CD4-positive, alpha-beta memory T cell (primary cell): ENCODE measurements at regions of chr6 and their contacts with region 1.

Region 1: GRCh38 chr6:3356056-3356761 is 97.5 kb downstream of the PSMG4 start:
- DNase-seq: peak; percentile 65 to 84 (median 78)
- H3K4me3 ChIP-seq: peak overlapping the region; percentile 14 to 59
- H3K4me3 Mint-ChIP-seq: peak overlapping the region; percentile 86 to 93 (median 88)
- H3K27ac ChIP-seq: peak overlapping the region; percentile 57
- H3K27ac Mint-ChIP-seq: peak overlapping the region; percentile 94 to 98 (median 97)
- H3K4me1 ChIP-seq: peaks cover 36% of the 10 kb centered on the region
- H3K4me1 Mint-ChIP-seq: peaks cover 33 to 58% (median 42%) of the 10 kb centered on the region in 4 donors
- H3K27me3 ChIP-seq: no peaks in the 10 kb centered on the region
- H3K27me3 Mint-ChIP-seq: peaks cover 1 to 4% of the 10 kb centered on the region in 2 donors

Region 2: DNA sequence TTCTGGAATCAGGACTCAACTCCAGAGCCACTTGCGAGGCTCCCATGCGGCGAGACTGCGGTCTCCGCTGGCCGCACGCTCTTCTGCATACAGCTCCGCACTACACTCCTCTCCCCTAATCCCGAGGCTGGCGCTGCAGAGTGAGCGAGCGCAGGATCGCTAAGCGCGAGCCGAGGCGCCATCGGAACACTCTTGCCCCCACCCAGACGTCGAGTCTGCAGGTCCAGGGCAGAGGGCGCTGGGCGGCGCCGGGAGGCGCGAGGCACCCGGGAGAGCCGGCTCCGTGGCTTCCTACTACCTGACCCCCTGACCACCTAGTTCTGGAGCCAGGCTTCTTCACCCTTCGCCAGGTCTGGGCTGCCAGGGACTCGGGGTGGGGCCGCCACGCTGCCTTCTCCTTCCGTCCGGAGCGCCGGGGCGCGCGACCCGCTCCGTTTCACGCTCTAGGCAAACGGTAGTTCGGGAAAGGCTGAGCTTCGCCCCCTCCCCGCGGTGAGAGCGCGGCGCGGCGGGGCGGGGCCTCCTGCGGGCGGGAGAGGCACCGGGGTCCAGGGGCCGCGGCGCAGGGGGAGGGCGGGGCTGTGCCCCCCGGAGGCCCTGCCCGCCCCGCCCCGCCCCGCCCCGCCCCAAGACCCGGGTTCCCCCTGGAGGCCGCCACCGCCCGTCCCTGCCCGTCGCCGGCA is 193.5 kb before region 1 on chr6:
- CTCF ChIA-PET with region 1: no interaction called
- POLR2A ChIA-PET with region 1: no interaction called
- intact Hi-C with region 1: loop called (anchors 1 kb)
- DNase-seq: peak; percentile 48 to 72 (median 55)
- H3K4me3 ChIP-seq: peak overlapping the region; percentile 53 to 61
- H3K4me3 Mint-ChIP-seq: peak overlapping the region; percentile 84 to 91 (median 85)
- H3K27ac ChIP-seq: peak overlapping the region; percentile 58
- H3K27ac Mint-ChIP-seq: peak overlapping the region; percentile 81 to 97 (median 87)
- H3K4me1 ChIP-seq: peaks cover 35% of the 10 kb centered on the region
- H3K4me1 Mint-ChIP-seq: peaks cover 27 to 49% (median 33%) of the 10 kb centered on the region in 4 donors
- H3K27me3 ChIP-seq: no peaks in the 10 kb centered on the region
- H3K27me3 Mint-ChIP-seq: peaks cover 0 to under 1% of the 10 kb centered on the region in 2 donors

Region 3: GRCh38 chr6:3281631-3282475 is 74.4 kb before region 1 on chr6:
- CTCF ChIA-PET with region 1: interaction called, 3 read pairs
- POLR2A ChIA-PET with region 1: no interaction called
- intact Hi-C with region 1: loop called (anchors 5 kb)
- DNase-seq: no peak
- H3K4me3 ChIP-seq: no peak overlapping the region
- H3K4me3 Mint-ChIP-seq: no peak overlapping the region
- H3K27ac ChIP-seq: no peak overlapping the region
- H3K27ac Mint-ChIP-seq: peak overlapping the region in 2 of 7 donors; percentile 8 to 10
- H3K4me1 ChIP-seq: peaks cover 3% of the 10 kb centered on the region
- H3K4me1 Mint-ChIP-seq: peaks cover 4 to 8% (median 6%) of the 10 kb centered on the region in 4 donors
- H3K27me3 ChIP-seq: no peaks in the 10 kb centered on the region
- H3K27me3 Mint-ChIP-seq: no peaks in the 10 kb centered on the region

Region 4: GRCh38 chr6:3456755-3457466 is 100.7 kb after region 1 on chr6 and contains the start of gene SLC22A23:
- CTCF ChIA-PET with region 1: no interaction called
- POLR2A ChIA-PET with region 1: interaction called, 3 read pairs
- intact Hi-C with region 1: loop called (anchors 1 kb)
- DNase-seq: peak; percentile 74 to 79 (median 76)
- H3K4me3 ChIP-seq: peak within 1 kb of the TSS; percentile 55 to 63
- H3K4me3 Mint-ChIP-seq: peak within 1 kb of the TSS; percentile 81 to 92 (median 88)
- H3K27ac ChIP-seq: peak within 1 kb of the TSS; percentile 37
- H3K27ac Mint-ChIP-seq: peak within 1 kb of the TSS; percentile 62 to 89 (median 80)
- H3K4me1 ChIP-seq: peaks cover 35% of the 10 kb centered on the region
- H3K4me1 Mint-ChIP-seq: peaks cover 6 to 14% (median 9%) of the 10 kb centered on the region in 4 donors
- H3K27me3 ChIP-seq: peaks cover 6% of the 10 kb centered on the region
- H3K27me3 Mint-ChIP-seq: peaks cover 3 to 9% of the 10 kb centered on the region in 2 donors
- total RNA-seq, gene SLC22A23: 7.9 to 12.5 TPM

Region 5: DNA sequence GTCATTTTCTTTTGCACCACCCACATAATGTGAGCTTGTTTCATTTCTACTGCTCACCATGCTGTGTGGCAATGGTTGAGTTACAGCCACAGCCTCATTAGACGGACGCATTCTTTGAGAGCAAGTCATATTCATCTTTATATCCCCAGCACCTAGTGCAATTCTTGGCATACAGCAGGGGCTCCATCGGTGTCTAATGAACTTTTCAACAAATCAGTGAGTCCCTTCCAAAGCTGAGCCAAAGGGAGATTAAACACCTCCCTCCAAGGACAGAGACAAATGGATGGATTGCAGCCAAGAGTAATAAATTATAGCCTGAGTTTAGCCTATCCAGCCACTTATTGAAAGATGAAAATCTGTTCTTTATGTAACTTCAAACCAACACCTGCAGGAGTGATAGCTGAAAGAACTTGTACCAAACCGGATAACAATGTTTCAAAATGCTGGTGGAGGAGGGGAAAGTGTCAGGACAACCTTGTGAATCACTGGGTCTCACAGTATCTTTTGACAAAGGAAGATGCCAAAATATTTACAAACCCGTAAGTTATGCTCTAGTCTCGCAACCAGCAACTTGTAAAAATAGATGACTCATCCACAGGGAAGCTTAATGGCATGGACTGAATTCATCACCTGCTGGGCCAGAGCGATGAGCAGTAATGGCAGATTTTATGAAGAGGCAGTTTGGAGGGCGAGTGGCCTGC is 256.3 kb after region 1 on chr6:
- CTCF ChIA-PET with region 1: no interaction called
- POLR2A ChIA-PET with region 1: no interaction called
- intact Hi-C with region 1: no loop called
- DNase-seq: no peak
- H3K4me3 ChIP-seq: no peak overlapping the region
- H3K4me3 Mint-ChIP-seq: no peak overlapping the region
- H3K27ac ChIP-seq: no peak overlapping the region
- H3K27ac Mint-ChIP-seq: no peak overlapping the region
- H3K4me1 ChIP-seq: no peaks in the 10 kb centered on the region
- H3K4me1 Mint-ChIP-seq: no peaks in the 10 kb centered on the region
- H3K27me3 ChIP-seq: no peaks in the 10 kb centered on the region
- H3K27me3 Mint-ChIP-seq: peaks cover 1 to 18% of the 10 kb centered on the region in 2 donors

Region 6: GRCh38 chr6:4775584-4776494 is 1419.6 kb after region 1 on chr6 and contains the start of gene CDYL:
- CTCF ChIA-PET with region 1: no interaction called
- POLR2A ChIA-PET with region 1: no interaction called
- intact Hi-C with region 1: loop called (anchors 10 kb)
- DNase-seq: peak; percentile 83 to 92 (median 90)
- H3K4me3 ChIP-seq: peak within 1 kb of the TSS; percentile 71 to 75
- H3K4me3 Mint-ChIP-seq: peak within 1 kb of the TSS; percentile 90 to 96 (median 92)
- H3K27ac ChIP-seq: peak within 1 kb of the TSS; percentile 52
- H3K27ac Mint-ChIP-seq: peak within 1 kb of the TSS; percentile 65 to 96 (median 91)
- H3K4me1 ChIP-seq: peaks cover 42% of the 10 kb centered on the region
- H3K4me1 Mint-ChIP-seq: peaks cover 31 to 51% (median 40%) of the 10 kb centered on the region in 4 donors
- H3K27me3 ChIP-seq: no peaks in the 10 kb centered on the region
- H3K27me3 Mint-ChIP-seq: no peaks in the 10 kb centered on the region
- total RNA-seq, gene CDYL: 31.7 to 36.7 TPM